ENCODE measurements at regions of chr7 and their contacts with region 1.

Region 1: DNA sequence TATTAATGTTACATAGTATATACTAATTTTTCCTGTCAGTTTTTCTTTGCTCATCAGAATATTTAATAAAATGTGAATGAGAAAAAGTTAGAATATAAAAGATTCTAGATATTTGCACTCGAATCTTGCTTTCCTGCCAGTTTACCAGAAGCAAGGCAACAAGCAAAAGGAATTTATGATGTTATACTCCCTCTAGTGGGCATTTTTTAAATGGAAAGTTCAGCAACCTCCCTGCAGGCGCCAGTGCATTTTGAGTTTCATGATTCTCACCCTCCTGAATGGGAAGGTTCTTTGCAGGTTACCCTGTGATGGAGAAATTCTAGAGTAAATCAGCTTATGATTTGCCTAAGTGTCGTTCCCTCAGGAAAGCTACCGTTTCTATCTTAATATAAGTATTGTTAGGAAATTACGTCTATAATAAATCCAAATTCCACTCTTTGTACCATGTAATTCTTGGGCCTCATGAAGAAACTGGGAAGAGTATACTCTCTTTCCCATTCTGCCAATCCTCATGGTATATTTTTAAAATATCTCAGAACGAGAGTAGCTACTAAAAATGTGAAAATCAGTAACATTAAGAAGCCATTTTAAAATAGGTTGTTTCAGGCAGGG is 350.0 kb downstream of the CRPPA start:
- DNase-seq: no peak
- H3K4me3 ChIP-seq: no peak overlapping the region
- H3K27ac ChIP-seq: no peak overlapping the region
- H3K4me1 ChIP-seq: peaks cover 0 to 5% of the 10 kb centered on the region in 2 donors
- H3K27me3 ChIP-seq: no peaks in the 10 kb centered on the region
- CTCF ChIP-seq: peak; percentile 66 to 74 (median 71)

Region 2: DNA sequence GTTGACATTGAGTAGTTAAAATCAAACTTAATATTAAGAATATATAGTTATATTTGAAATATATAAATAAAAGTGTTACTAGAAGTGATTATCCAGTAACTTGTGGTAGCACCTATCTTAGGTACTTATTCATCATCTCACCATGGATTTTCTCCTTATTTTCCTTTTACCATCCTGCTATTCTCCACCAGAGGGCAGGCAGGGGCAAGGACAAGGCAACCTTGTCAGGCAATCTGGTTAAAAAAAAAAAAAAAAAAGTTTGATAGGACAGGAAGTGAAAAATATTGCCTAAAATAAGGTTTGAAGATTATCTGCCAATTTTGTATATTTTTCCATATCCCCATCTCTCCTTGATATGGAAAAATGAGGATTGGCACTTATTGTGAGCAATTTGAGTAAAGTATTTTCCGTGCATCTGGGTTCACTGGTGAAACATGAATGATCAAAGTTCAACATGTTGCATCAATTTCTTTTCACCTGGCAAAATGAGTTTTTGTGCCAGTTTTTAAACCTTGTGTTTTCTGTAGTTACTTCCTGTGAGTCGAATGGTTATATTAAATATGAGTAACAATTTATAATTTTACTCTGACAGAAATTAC is 766.3 kb before region 1 on chr7:
- intact Hi-C with region 1: loop called (anchors 2 kb)
- DNase-seq: no peak
- H3K4me3 ChIP-seq: no peak overlapping the region
- H3K27ac ChIP-seq: no peak overlapping the region
- H3K4me1 ChIP-seq: no peaks in the 10 kb centered on the region
- H3K27me3 ChIP-seq: no peaks in the 10 kb centered on the region
- CTCF ChIP-seq: peak in 2 of 3 experiments; percentile 51 to 67

Region 3: DNA sequence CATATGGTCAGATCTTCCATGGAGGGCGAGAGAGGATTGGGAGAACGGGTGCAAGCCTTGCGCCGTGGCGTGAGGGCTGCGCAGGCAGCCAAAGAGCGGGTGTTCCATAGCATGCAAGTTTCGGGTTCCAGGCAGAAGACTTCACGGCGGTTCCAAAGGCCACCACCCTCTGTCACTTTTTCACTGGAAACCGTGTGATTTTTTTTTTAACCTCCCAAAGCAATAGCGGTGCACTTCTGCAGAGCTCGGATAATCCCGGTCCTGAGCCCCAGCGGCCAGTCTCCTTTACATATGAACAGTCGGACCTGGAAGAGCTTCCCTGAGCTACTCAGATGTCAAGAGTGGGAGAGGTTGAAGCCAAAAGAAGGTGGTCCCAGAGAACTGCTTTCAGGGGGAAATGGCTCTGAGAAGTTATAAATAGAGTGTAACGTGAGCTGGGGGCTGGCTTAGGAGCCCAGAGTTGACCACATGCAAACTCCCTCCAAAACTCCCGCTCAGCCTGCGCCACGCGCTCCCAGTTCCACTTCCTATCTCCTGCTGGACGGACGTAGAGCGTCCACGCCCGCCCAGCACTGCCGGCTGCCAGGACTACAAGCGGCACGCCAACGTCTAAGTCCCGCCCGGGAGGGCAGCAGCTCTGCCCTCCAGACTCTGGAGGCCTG is 384.9 kb before region 1 on chr7 and contains the start of gene MEOX2:
- intact Hi-C with region 1: loop called (anchors 2 kb)
- DNase-seq: peak; percentile 28 to 80
- H3K4me3 ChIP-seq: peak within 1 kb of the TSS; percentile 59 to 66
- H3K27ac ChIP-seq: peak within 1 kb of the TSS; percentile 75 to 83
- H3K4me1 ChIP-seq: no peaks in the 10 kb centered on the region
- H3K27me3 ChIP-seq: no peaks in the 10 kb centered on the region
- CTCF ChIP-seq: no peak
- total RNA-seq, gene MEOX2: 35.0 TPM

Region 4: DNA sequence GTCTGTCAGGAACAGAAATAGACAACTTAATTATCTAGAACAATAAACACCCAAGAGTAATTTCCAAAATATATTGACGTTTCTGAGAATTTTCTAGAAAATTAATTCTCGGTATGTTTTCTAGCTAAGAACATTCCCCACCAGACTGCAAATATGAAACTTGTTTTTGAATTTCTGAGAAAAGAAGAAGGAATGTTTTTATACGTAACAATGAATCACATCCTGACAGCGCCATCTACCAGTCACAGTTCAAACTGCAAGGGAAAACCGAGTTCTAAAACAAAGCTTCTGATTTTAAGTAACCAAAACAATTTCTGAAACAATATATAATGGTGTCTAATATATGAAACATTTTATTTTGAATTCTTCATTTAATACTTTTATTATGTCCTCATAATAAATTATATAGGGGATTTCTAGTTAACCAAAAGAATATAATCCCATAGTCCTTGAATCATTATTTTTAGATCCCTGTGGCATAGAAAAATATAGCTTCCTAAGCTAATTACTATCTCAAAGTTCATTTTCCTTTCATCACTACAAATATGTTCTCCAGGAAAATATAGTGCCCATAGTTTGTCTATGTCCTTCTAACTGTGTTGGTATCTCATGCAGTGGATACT is 350.4 kb before region 1 on chr7:
- intact Hi-C with region 1: loop called (anchors 5 kb)
- DNase-seq: peak in 1 of 2 donors; percentile 74
- H3K4me3 ChIP-seq: no peak overlapping the region
- H3K27ac ChIP-seq: peak overlapping the region; percentile 23 to 27
- H3K4me1 ChIP-seq: no peaks in the 10 kb centered on the region
- H3K27me3 ChIP-seq: no peaks in the 10 kb centered on the region
- CTCF ChIP-seq: peak; percentile 43 to 65 (median 55)